Lower leg skin (tissue), 4 donors: ENCODE measurements at regions of chr11 and their contacts with region 1.

Region 1: DNA sequence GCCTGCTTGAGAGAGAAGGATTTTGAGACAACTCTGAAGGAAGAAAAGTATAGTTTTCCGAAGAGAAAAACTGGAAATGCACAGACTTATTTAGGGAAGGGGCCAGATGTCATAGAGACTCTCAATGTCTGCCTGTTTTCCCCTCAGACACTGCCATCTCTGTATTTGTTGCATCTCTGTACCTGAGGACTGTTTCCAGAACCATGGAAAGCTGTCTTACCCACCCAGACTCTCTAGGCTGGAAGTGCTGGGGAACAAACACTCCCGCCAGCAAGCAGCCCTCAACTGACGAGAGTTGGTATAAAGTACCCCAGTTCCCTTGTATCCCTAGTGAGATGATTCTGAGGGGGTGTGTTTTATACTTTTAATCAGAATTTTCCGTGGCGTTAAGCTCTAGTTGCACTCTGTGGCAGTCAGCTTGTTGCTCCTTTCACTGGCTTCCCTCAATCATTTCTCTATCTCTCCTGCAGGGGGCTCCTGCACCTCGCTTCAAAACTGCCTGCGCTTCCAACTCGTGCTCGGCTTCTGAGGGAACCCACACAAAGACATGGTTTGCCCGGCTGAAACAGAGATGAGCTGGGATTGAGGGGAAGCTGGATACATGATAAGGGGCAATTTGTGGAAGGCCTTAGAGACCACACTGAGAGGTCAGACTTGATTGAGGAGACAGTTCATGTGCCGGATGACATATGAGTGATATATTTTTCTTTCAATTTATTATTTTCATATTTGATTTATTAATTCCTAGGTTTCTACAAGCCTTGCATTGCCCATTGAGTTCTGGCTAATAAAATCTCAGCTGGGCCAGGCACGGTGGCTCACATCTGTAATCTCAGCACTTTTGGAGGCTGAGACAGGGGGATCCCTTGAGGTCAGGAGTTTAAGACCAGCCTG is 36.9 kb upstream of the CLPB start:
- DNase-seq: peak; percentile 66 to 85
- H3K4me3 ChIP-seq: no peak overlapping the region
- CTCF ChIP-seq: peak in 1 of 3 donors; percentile 64
- POLR2A ChIP-seq: no peak

Region 2: DNA sequence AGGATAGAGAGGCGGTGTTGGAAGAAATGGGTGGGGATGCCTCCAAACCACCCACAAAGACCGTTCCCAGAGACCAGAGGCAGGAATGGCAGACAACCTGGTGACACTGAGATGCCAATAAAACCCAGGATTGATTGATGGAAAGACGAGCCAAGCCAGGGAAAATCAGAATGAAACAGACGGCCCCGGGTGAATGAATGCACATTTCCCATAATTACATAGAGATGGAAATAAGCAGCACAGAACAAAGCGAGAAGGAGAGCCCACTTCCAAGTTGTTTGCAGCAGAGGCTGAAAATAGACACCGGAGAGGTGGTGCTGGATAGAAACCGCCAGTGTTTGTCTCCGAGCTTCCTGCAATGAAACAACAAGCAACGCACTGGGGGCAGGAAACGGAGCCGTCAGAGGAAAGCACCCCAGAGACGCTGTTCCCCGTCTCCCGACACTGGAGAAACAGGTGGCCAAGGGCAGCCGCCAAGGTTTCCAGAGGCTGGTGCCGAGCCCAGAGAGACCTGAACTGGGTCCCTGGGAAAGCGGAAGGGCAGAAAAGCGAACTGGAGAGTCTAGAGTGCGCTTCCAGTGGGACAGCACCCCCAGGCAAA is 1625.6 kb before region 1 on chr11:
- intact Hi-C with region 1: no loop called
- DNase-seq: no peak
- H3K4me3 ChIP-seq: no peak overlapping the region
- CTCF ChIP-seq: no peak
- POLR2A ChIP-seq: no peak

Region 3: GRCh38 chr11:72240461-72241290 is 230.6 kb before region 1 on chr11:
- intact Hi-C with region 1: no loop called
- DNase-seq: peak in 1 of 2 donors; percentile 84
- H3K4me3 ChIP-seq: no peak overlapping the region
- CTCF ChIP-seq: no peak
- POLR2A ChIP-seq: no peak

Region 4: GRCh38 chr11:72683782-72684200 is 212.5 kb after region 1 on chr11:
- intact Hi-C with region 1: no loop called
- DNase-seq: peak; percentile 59 to 93
- H3K4me3 ChIP-seq: no peak overlapping the region
- CTCF ChIP-seq: peak in 1 of 3 donors; percentile 68
- POLR2A ChIP-seq: no peak

Region 5: DNA sequence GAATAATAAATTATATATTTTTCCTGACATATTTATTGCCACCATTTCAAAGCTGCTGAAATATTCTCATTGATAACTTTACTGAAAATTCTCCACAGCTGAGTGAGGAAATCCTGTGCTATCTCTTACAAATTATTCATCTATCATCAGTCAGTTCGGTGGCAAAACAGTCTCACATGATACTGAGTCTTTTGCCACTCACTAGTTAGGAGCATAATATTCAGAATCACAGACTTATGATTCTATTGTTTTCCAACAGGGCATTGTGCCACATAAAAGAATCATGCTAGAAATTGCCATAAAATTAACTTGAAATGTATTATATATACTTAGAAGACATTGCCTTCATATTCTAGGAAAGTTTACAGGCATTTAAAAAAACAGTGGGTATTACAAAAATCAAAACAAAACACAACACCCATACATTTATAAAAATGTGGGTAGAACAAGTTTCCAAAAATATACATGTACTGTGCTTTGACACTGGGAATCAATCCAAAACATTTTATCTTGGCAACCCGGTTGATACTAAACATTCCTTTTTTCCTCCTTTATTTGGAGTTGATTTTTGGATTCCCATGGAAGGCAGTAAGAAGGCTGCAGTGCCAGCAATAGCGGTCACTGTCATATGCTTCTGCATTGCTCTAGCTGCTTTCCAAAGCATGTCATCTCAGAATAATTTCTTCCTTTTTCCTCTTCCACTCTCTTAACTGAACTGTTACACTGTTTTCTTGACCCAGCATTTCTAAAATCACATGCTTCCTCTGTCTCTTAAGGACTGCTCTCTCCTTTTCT is 385.5 kb after region 1 on chr11:
- intact Hi-C with region 1: loop called (anchors 10 kb)
- DNase-seq: no peak
- H3K4me3 ChIP-seq: no peak overlapping the region
- CTCF ChIP-seq: no peak
- POLR2A ChIP-seq: no peak